B cell (primary cell): ENCODE measurements at regions of chr2 and their contacts with region 1.

Region 1: GRCh38 chr2:231452799-231453508 is 11.3 kb downstream of the NCL start:
- DNase-seq: no peak
- ATAC-seq: no peak
- H3K4me3 ChIP-seq: no peak overlapping the region
- H3K4me3 Mint-ChIP-seq: no peak overlapping the region
- H3K27ac ChIP-seq: no peak overlapping the region
- H3K27ac Mint-ChIP-seq: no peak overlapping the region
- H3K4me1 ChIP-seq: no peaks in the 10 kb centered on the region
- H3K4me1 Mint-ChIP-seq: peaks cover 5% of the 10 kb centered on the region
- H3K27me3 ChIP-seq: no peaks in the 10 kb centered on the region
- H3K27me3 Mint-ChIP-seq: no peaks in the 10 kb centered on the region
- CTCF ChIP-seq: no peak

Region 2: DNA sequence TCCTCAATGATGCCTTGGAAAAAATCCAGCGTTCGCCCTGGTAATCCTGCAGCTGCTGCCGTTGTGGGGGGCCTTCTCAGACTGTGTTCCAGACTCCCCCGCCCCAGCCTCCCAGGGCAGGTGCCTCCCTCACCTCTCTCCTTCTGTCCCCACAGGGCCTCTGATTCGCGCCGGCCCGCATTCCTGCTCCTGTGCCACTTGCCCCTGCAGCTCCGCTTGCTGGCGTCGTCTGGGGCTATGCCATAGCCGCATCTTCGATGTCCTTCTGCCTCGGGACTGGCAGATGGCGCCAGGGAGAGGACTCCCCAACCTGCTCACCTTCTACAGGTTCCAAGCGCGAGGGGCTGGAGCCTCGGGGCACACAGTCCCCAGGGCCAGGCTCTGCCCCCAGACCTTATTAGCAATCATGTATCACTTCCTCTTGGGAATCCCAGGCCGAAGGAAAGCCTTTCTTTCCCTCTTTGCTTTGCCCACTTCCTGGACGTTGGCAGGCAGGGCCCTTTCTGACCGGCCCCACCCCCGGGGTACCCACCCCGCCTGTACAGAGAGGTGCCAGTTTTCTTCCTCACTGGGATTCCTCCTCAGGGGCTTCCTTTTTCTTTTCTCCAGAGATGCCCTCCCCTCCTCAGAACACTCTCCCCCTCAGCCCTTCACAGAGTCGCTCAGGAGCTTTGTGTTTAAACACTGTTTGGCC is 452.6 kb before region 1 on chr2:
- CTCF ChIA-PET with region 1: no interaction called
- POLR2A ChIA-PET with region 1: no interaction called
- intact Hi-C with region 1: no loop called
- DNase-seq: no peak
- ATAC-seq: no peak
- H3K4me3 ChIP-seq: no peak overlapping the region
- H3K4me3 Mint-ChIP-seq: no peak overlapping the region
- H3K27ac ChIP-seq: no peak overlapping the region
- H3K27ac Mint-ChIP-seq: no peak overlapping the region
- H3K4me1 ChIP-seq: no peaks in the 10 kb centered on the region
- H3K4me1 Mint-ChIP-seq: no peaks in the 10 kb centered on the region
- H3K27me3 ChIP-seq: peaks cover 0 to 47% (median 13%) of the 10 kb centered on the region in 4 experiments
- H3K27me3 Mint-ChIP-seq: peaks cover 65% of the 10 kb centered on the region
- CTCF ChIP-seq: no peak

Region 3: DNA sequence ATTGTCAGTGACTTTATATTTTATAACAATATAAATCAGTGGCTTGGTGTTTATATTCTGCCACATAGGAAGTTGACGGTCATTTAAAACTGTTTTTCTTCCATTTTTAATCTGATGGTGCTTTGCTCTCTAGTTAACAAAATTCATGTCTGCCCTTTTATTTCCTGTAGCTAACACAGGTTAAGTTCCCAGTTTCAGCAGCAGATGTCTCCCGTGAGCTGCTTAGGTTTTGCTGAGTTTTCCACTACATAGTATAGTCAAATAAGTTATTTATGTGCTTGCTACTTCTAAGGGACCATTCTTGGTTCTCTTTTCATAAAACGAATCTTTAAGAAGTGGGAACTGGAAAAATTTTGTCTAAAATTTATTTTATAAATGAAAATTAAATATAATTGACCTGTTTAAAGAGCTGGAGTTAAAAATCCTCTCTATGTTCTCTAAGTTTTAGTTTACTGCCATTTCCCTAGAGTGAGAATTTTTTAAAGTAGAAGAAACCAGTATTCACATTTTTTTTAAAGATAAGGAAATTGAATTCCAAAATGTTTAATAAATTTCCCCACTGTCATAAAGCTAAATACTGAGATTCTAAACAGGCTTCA is 348.7 kb before region 1 on chr2:
- CTCF ChIA-PET with region 1: interaction called, 86 read pairs
- POLR2A ChIA-PET with region 1: no interaction called
- intact Hi-C with region 1: loop called (anchors 1 kb)
- DNase-seq: peak; percentile 73
- ATAC-seq: peak; percentile 69
- H3K4me3 ChIP-seq: no peak overlapping the region
- H3K4me3 Mint-ChIP-seq: no peak overlapping the region
- H3K27ac ChIP-seq: no peak overlapping the region
- H3K27ac Mint-ChIP-seq: no peak overlapping the region
- H3K4me1 ChIP-seq: no peaks in the 10 kb centered on the region
- H3K4me1 Mint-ChIP-seq: no peaks in the 10 kb centered on the region
- H3K27me3 ChIP-seq: no peaks in the 10 kb centered on the region
- H3K27me3 Mint-ChIP-seq: no peaks in the 10 kb centered on the region
- CTCF ChIP-seq: peak; percentile 87

Region 4: GRCh38 chr2:231297108-231297908 is 155.6 kb before region 1 on chr2:
- CTCF ChIA-PET with region 1: interaction called, 13 read pairs
- POLR2A ChIA-PET with region 1: no interaction called
- intact Hi-C with region 1: loop called (anchors 5 kb)
- DNase-seq: peak; percentile 68
- ATAC-seq: peak; percentile 62
- H3K4me3 ChIP-seq: no peak overlapping the region
- H3K4me3 Mint-ChIP-seq: no peak overlapping the region
- H3K27ac ChIP-seq: no peak overlapping the region
- H3K27ac Mint-ChIP-seq: no peak overlapping the region
- H3K4me1 ChIP-seq: peaks cover 30 to 56% of the 10 kb centered on the region in 2 donors
- H3K4me1 Mint-ChIP-seq: peaks cover 56% of the 10 kb centered on the region
- H3K27me3 ChIP-seq: no peaks in the 10 kb centered on the region
- H3K27me3 Mint-ChIP-seq: no peaks in the 10 kb centered on the region
- CTCF ChIP-seq: peak; percentile 76

Region 5: GRCh38 chr2:231342061-231342711 is 110.8 kb before region 1 on chr2:
- CTCF ChIA-PET with region 1: no interaction called
- POLR2A ChIA-PET with region 1: no interaction called
- intact Hi-C with region 1: no loop called
- DNase-seq: no peak
- ATAC-seq: no peak
- H3K4me3 ChIP-seq: no peak overlapping the region
- H3K4me3 Mint-ChIP-seq: no peak overlapping the region
- H3K27ac ChIP-seq: no peak overlapping the region
- H3K27ac Mint-ChIP-seq: no peak overlapping the region
- H3K4me1 ChIP-seq: no peaks in the 10 kb centered on the region
- H3K4me1 Mint-ChIP-seq: no peaks in the 10 kb centered on the region
- H3K27me3 ChIP-seq: no peaks in the 10 kb centered on the region
- H3K27me3 Mint-ChIP-seq: no peaks in the 10 kb centered on the region
- CTCF ChIP-seq: no peak

Region 6: GRCh38 chr2:231411831-231412617 is 40.9 kb before region 1 on chr2:
- CTCF ChIA-PET with region 1: interaction called, 29 read pairs
- POLR2A ChIA-PET with region 1: no interaction called
- intact Hi-C with region 1: loop called (anchors 1 kb)
- DNase-seq: peak; percentile 88
- ATAC-seq: peak; percentile 100
- H3K4me3 ChIP-seq: peak overlapping the region in 4 of 5 experiments; percentile 10 to 62 (median 52)
- H3K4me3 Mint-ChIP-seq: peak overlapping the region; percentile 80
- H3K27ac ChIP-seq: no peak overlapping the region
- H3K27ac Mint-ChIP-seq: no peak overlapping the region
- H3K4me1 ChIP-seq: peaks cover 12 to 13% of the 10 kb centered on the region in 2 donors
- H3K4me1 Mint-ChIP-seq: peaks cover 7% of the 10 kb centered on the region
- H3K27me3 ChIP-seq: peaks cover 0 to 24% (median 10%) of the 10 kb centered on the region in 4 experiments
- H3K27me3 Mint-ChIP-seq: peaks cover 21% of the 10 kb centered on the region
- CTCF ChIP-seq: peak; percentile 87

Region 7: DNA sequence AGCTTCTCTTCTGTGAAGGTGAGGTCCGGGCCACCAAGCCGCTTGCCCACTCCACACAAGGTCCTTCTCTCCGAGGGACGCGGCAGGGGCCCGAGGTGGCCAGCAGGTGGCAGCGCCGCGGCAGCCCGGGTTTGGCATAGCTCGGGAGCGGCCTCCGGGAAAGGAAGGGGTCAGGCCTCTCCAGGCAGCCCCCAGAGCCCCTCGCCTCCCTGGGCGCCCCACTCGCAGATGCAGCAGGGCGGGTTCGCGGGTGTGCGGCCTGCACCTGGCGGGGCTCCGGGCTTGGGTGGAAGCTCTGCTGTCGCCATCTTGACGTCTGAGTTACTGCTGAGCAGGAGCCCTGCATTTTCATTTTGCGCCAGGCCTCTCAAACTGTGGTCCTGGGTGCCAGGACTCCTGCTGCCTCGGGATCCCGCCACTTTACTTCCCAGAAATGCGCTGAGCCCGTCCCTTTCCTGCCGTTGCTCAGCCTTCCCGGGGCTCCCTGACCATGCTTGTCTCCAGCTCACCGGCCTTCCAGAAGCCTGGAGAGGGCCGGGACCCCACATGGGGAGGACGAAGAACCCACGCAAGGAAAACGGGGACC is 29.9 kb after region 1 on chr2:
- CTCF ChIA-PET with region 1: interaction called, 12 read pairs
- POLR2A ChIA-PET with region 1: no interaction called
- intact Hi-C with region 1: no loop called
- DNase-seq: peak; percentile 82
- ATAC-seq: peak; percentile 85
- H3K4me3 ChIP-seq: peak overlapping the region in 4 of 5 experiments; percentile 58 to 65 (median 59)
- H3K4me3 Mint-ChIP-seq: peak overlapping the region; percentile 83
- H3K27ac ChIP-seq: peak overlapping the region; percentile 71 to 75
- H3K27ac Mint-ChIP-seq: peak overlapping the region; percentile 86
- H3K4me1 ChIP-seq: peaks cover 0 to 19% of the 10 kb centered on the region in 2 donors
- H3K4me1 Mint-ChIP-seq: peaks cover 7% of the 10 kb centered on the region
- H3K27me3 ChIP-seq: no peaks in the 10 kb centered on the region
- H3K27me3 Mint-ChIP-seq: no peaks in the 10 kb centered on the region
- CTCF ChIP-seq: peak; percentile 91